GM10248 (cell line): ENCODE measurements at regions of chr7 and their contacts with region 1.

Region 1: DNA sequence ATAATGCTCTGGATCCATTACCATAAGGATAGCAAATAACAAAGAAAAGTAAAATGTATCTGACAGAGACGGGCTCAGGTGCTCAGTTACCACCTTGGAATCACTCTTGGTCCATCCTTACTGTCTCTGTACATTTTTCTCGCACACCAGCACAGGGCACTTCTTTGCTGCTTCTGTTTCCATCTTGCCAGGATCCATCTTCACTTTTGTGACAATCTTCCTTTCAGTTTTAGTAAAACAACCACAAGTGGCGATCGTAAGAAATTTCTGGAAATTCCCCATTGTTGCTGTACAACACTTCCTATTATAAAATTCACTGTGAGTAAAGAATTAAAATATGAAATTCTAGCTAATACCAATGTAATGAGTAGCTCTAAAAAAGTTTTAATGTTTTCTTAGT is 695.5 kb downstream of the GRM8 start:
- DNase-seq: no peak
- CTCF ChIP-seq: no peak

Region 2: DNA sequence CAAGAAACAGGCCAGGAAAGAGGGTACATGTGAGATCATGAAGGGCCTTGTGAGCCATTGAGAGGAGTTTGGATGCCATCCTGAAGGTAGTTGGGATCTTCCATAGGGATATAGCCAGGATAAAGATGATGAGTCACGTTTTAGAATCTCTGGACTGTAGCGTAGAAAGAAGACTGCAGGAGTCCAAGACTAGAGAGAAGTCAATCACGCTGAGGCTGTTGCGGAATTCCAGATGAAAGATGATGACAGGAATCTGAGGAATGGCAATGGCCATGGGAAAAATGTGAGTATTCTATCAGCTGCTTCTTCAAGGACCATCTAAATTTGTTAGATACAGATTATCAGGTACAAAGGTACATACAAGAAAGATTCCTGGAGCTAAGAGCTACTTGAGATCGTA is 15.9 kb before region 1 on chr7:
- CTCF ChIA-PET with region 1: no interaction called
- POLR2A ChIA-PET with region 1: no interaction called
- DNase-seq: no peak
- CTCF ChIP-seq: no peak

Region 3: DNA sequence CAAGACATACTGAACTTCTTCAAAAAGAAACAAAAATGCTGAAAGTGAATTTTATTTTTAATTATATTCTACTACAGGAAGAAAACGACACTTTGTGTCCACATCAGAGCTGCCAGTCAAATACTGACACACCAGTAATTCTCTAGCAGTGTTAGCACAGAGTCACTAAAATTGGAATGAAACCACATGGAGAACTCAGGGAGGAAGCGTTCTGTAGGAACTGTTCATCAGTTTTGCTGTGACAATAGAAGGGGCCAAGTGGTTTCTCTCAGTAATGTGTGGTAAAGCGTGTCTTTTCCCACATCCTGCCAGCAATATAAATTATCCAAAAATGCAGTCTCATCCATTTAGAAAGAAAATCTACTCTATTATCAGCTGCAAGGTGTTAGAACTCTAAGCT is 12.1 kb after region 1 on chr7:
- CTCF ChIA-PET with region 1: interaction called, 11 read pairs
- POLR2A ChIA-PET with region 1: no interaction called
- DNase-seq: no peak
- CTCF ChIP-seq: no peak

Region 4: DNA sequence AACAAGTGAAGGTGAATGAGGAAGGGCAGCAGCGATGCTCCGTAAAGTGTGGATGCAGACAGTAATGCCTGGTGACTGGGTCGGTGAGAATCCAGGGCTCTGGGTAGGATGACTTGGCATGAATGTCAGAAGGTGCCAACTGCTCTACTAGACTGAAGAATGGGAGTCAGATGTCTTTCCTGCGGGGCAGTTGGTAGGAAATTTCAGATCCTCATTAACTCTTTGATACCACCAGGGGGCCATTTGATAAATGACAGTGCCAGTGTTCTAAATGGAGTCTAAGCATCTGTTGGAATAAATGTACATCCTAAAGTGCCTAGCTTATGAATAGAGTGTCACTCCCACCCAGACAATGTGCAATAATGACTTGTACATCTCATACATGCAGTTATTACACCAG is 233.5 kb after region 1 on chr7:
- CTCF ChIA-PET with region 1: no interaction called
- POLR2A ChIA-PET with region 1: no interaction called
- DNase-seq: no peak
- CTCF ChIP-seq: no peak